Activated CD4-positive, alpha-beta T cell treated with anti-CD3 and anti-CD28 coated beads for 36 hours (primary cell): ENCODE measurements at regions of chr11 and their contacts with region 1.

Region 1: GRCh38 chr11:34366522-34366921 is 8.7 kb upstream of the ABTB2 start:
- DNase-seq: peak; percentile 46
- ATAC-seq: no peak
- H3K4me3 Mint-ChIP-seq: no peak overlapping the region
- H3K27ac Mint-ChIP-seq: no peak overlapping the region
- H3K4me1 Mint-ChIP-seq: peaks cover 13% of the 10 kb centered on the region
- H3K27me3 Mint-ChIP-seq: peaks cover 10% of the 10 kb centered on the region

Region 2: GRCh38 chr11:34405079-34405858 is 38.7 kb after region 1 on chr11:
- CTCF ChIA-PET with region 1: interaction called, 3 read pairs
- POLR2A ChIA-PET with region 1: no interaction called
- intact Hi-C with region 1: loop called (anchors 1 to 2 kb)
- DNase-seq: peak; percentile 7
- ATAC-seq: peak; percentile 88
- H3K4me3 Mint-ChIP-seq: no peak overlapping the region
- H3K27ac Mint-ChIP-seq: peak overlapping the region; percentile 33
- H3K4me1 Mint-ChIP-seq: peaks cover 17% of the 10 kb centered on the region
- H3K27me3 Mint-ChIP-seq: peaks cover 17% of the 10 kb centered on the region

Region 3: GRCh38 chr11:34468209-34468841 is 101.8 kb after region 1 on chr11:
- CTCF ChIA-PET with region 1: interaction called, 15 read pairs
- POLR2A ChIA-PET with region 1: no interaction called
- intact Hi-C with region 1: loop called (anchors 1 to 2 kb)
- DNase-seq: peak; percentile 68
- ATAC-seq: peak; percentile 66
- H3K4me3 Mint-ChIP-seq: no peak overlapping the region
- H3K27ac Mint-ChIP-seq: no peak overlapping the region
- H3K4me1 Mint-ChIP-seq: peaks cover 4% of the 10 kb centered on the region
- H3K27me3 Mint-ChIP-seq: no peaks in the 10 kb centered on the region

Region 4: GRCh38 chr11:34492806-34493414 is 126.4 kb after region 1 on chr11:
- CTCF ChIA-PET with region 1: interaction called, 3 read pairs
- POLR2A ChIA-PET with region 1: no interaction called
- intact Hi-C with region 1: loop called (anchors 1 kb)
- DNase-seq: peak; percentile 63
- ATAC-seq: no peak
- H3K4me3 Mint-ChIP-seq: no peak overlapping the region
- H3K27ac Mint-ChIP-seq: no peak overlapping the region
- H3K4me1 Mint-ChIP-seq: no peaks in the 10 kb centered on the region
- H3K27me3 Mint-ChIP-seq: no peaks in the 10 kb centered on the region